ENCODE measurements at regions of chr19 and their contacts with region 1.

Region 1: DNA sequence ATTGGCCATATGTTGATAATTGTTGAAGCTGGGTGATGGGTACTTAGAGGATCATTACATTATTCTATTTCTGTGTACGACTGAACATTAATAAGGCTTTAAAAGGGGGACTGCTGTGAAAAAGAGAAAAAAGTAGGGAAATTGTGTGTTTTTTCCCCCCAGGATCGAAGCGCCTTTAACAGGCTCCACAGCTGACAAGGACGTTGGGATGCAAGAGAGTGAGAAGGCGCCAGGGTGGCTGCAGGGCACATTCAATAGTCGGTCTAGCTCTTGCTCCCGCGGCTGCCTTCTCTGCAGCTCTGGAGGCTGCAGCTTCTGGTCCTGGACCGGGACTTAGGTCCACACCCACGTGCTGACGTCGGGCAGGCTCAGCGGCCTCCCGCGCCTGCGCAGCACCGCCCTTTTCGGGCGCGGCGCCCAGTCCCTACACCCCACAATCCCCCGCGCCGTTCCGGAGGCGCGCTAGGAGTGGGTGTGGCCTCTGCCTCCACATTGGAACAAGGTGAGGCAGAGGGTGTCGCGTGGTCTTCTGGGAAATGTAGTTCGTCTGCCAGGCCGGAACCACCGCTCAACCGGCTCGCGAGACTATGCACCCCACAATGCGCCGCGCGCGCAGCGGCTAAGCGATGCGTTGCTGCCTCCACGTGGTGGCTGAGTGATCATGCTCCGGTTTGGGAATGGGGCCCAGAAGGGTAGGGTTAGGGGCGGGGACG is 4.9 kb upstream of the LRFN3 start:
- DNase-seq: peak; percentile 100
- H3K4me3 ChIP-seq: peak overlapping the region; percentile 67
- H3K27ac ChIP-seq: peak overlapping the region; percentile 61
- H3K4me1 ChIP-seq: peaks cover 12% of the 10 kb centered on the region
- CTCF ChIP-seq: peak; percentile 95

Region 2: DNA sequence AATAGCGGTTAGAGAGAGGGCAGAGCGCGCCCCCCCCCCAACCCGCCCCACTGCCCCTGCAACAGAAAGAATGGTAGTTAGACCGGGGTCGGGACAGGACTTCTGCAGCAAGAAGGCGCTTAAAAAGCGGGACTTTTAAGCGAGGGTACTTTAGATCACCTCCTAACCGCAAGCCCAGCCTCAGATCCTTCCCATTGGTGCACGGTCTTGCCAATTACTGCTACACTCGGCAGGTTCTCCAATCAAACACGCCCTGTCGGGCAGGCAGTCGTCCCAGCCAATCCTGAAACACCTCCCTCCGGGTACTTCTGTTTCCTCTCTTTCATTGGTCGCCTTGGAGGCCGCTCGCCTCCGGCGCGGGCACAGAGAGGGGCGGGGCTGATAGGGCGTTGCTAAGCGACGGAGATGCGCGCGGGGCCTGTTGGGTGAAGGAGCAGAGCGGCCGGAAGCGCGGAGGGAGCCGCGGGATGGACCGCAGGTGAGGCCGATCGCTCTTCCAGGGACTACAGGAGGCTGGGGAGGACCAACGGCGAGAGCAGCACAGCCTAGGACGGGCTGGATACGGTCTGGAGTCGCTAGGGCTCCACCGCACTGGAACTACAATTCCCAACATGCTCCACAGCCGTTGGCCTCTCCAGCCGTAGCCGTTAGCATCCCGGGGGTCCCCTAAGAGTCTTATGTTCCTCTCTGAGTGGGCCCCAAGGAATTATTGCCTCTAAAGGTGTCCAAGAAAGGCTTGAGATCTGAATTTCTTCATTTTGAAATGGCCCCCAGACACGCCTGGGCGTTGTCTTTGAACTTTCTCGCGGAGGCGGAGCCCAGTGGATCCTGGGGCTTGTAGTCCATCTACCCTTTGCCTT is 173.3 kb before region 1 on chr19 and contains the start of gene PROSER3:
- CTCF ChIA-PET with region 1: no interaction called
- POLR2A ChIA-PET with region 1: no interaction called
- intact Hi-C with region 1: loop called (anchors 1 kb)
- DNase-seq: peak; percentile 99
- H3K4me3 ChIP-seq: peak within 1 kb of the TSS; percentile 96
- H3K27ac ChIP-seq: peak within 1 kb of the TSS; percentile 82
- H3K4me1 ChIP-seq: peaks cover 21% of the 10 kb centered on the region
- CTCF ChIP-seq: no peak
- total RNA-seq, gene PROSER3: 15.2 and 17.2 TPM in 2 replicates

Region 3: GRCh38 chr19:35882114-35882832 is 49.0 kb before region 1 on chr19:
- CTCF ChIA-PET with region 1: interaction called, 5 read pairs
- POLR2A ChIA-PET with region 1: no interaction called
- intact Hi-C with region 1: loop called (anchors 1 kb)
- DNase-seq: peak; percentile 76
- H3K4me3 ChIP-seq: no peak overlapping the region
- H3K27ac ChIP-seq: no peak overlapping the region
- H3K4me1 ChIP-seq: peaks cover 6% of the 10 kb centered on the region
- CTCF ChIP-seq: peak; percentile 82

Region 4: DNA sequence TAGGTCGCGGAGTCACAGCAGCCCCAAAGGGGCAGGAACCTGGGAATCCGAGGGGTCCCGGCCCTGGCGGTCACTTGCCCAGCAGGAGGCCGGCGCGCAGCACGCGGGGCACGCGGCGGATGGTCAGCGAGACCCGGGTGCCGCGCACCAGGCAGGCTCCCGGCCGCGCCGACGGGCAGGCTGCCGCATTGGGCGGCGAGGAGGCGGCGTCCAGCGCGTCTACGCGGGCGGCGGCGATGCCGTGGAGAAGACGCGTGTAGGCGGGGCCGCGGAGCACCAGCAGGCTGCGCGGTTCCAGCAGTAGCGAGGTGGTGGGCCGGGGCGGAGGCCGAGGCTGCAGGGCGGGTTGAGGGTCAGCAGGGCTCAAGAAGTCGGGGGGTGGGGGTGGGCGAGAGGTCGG is 77.9 kb after region 1 on chr19:
- CTCF ChIA-PET with region 1: no interaction called
- POLR2A ChIA-PET with region 1: no interaction called
- intact Hi-C with region 1: no loop called
- DNase-seq: no peak
- H3K4me3 ChIP-seq: no peak overlapping the region
- H3K27ac ChIP-seq: no peak overlapping the region
- H3K4me1 ChIP-seq: no peaks in the 10 kb centered on the region
- CTCF ChIP-seq: no peak

Region 5: DNA sequence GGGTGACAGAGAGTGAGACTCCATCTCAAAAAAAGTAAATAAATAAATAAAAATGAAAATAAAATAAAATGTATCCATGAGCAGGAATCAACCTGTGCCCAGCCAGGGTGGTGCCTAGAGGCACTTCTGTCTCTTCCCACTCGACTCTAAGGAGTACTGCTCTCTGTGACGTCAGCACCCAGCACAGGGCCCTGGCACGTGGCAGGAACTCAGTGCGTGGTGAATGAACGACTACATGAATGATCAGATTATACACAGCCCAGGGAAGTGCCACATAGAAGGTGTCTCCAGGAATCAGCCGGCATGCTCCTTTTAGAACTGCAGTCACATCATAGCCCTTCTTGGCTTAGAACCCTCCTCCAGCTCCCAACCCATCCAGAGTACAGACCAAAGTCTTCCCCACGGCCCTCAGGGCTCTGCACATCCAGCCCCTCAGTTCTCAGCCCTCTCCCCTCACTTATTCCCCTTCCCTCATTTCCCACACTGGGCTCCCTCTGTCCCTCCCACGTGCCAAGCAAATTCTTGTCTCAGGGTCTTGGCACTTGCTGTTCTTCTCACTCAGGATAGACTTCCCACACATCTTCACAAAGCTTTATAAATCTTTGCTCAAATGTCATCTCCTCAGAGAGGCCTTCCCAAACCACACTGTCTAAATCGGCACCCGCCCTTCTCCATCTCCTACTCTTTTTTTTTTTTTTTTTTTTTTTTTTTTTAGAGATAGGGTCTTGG is 97.2 kb after region 1 on chr19:
- CTCF ChIA-PET with region 1: no interaction called
- POLR2A ChIA-PET with region 1: no interaction called
- intact Hi-C with region 1: no loop called
- DNase-seq: no peak
- H3K4me3 ChIP-seq: no peak overlapping the region
- H3K27ac ChIP-seq: no peak overlapping the region
- H3K4me1 ChIP-seq: no peaks in the 10 kb centered on the region
- CTCF ChIP-seq: no peak

Measured in OCI-LY7 (cell line).